Activated CD4-positive, alpha-beta T cell treated with anti-CD3 and anti-CD28 coated beads for 36 hours (primary cell): ENCODE measurements at regions of chr12 and their contacts with region 1.

Region 1: DNA sequence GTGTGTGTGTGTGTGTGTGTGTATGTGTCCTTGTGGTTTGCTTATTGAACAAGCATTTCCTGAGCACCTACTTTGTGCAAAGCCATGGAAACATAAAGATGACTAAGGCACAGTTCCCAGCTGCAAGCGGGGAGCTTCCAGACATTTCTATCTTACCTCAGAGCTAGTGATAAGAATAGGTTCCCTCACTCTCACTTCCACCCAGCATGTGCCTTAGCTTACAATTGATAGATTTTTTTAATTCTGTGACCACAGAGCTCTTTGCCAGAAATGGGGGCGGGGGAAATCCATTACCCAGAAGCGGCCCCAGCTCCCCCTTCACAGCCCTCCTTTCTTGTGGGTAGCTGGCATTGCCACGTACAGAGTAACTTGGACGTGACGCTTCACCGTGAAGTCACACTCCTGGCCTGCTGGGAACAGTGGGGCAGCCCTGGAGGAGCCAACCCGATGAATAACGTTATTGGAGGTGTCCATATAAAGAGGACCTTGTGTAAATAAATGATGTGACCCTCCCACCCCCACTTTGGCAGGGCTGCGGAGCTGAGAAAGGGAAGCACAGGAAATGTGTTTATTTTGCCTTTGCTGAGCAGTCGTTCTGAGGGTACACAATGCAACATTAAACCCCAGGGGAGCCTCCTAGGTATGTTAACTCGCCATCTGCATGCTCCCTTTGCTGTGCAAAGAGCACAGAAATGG is 238.9 kb downstream of the CHST11 start:
- DNase-seq: peak; percentile 92
- ATAC-seq: peak; percentile 86
- H3K4me3 Mint-ChIP-seq: peak overlapping the region; percentile 36
- H3K27ac Mint-ChIP-seq: peak overlapping the region; percentile 92
- H3K4me1 Mint-ChIP-seq: peaks cover 69% of the 10 kb centered on the region
- H3K27me3 Mint-ChIP-seq: no peaks in the 10 kb centered on the region

Region 2: DNA sequence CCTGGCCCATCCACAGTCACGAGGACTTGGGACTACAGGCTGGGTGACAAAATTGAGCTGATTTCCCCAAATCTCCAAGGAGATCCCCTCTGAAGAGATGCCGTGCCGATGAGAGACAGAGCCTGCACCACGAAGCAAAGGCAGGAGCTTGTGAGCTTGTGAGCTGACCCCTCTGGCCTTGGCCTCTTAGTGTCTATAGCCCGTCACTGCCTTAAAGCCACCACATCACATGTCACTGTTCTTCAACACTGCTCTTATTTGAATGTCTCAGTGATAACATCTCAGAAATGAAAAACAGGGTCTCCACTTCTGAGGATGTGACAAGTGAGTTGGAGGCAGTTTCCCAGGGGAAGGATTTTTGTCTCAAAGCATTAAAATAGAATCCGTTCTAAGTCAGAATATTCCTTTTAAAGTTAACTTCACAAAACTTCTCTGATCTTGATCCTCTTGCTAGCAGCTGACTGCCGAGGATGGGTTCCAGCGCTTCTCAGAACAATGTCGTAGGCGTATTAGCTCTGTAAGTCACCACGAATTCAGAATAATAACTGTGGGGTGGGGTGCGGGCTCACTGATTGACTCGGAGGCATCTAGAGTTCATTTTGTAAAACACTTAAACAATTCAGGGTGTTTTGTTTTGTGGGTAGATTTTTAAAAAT is 201.3 kb before region 1 on chr12:
- CTCF ChIA-PET with region 1: no interaction called
- POLR2A ChIA-PET with region 1: no interaction called
- intact Hi-C with region 1: loop called (anchors 5 kb)
- DNase-seq: peak; percentile 88
- ATAC-seq: peak; percentile 72
- H3K4me3 Mint-ChIP-seq: peak overlapping the region; percentile 35
- H3K27ac Mint-ChIP-seq: peak overlapping the region; percentile 85
- H3K4me1 Mint-ChIP-seq: peaks cover 88% of the 10 kb centered on the region
- H3K27me3 Mint-ChIP-seq: no peaks in the 10 kb centered on the region

Region 3: GRCh38 chr12:104641862-104642261 is 53.7 kb before region 1 on chr12:
- CTCF ChIA-PET with region 1: no interaction called
- POLR2A ChIA-PET with region 1: no interaction called
- intact Hi-C with region 1: no loop called
- DNase-seq: no peak
- ATAC-seq: peak; percentile 57
- H3K4me3 Mint-ChIP-seq: no peak overlapping the region
- H3K27ac Mint-ChIP-seq: no peak overlapping the region
- H3K4me1 Mint-ChIP-seq: peaks cover 47% of the 10 kb centered on the region
- H3K27me3 Mint-ChIP-seq: no peaks in the 10 kb centered on the region

Region 4: DNA sequence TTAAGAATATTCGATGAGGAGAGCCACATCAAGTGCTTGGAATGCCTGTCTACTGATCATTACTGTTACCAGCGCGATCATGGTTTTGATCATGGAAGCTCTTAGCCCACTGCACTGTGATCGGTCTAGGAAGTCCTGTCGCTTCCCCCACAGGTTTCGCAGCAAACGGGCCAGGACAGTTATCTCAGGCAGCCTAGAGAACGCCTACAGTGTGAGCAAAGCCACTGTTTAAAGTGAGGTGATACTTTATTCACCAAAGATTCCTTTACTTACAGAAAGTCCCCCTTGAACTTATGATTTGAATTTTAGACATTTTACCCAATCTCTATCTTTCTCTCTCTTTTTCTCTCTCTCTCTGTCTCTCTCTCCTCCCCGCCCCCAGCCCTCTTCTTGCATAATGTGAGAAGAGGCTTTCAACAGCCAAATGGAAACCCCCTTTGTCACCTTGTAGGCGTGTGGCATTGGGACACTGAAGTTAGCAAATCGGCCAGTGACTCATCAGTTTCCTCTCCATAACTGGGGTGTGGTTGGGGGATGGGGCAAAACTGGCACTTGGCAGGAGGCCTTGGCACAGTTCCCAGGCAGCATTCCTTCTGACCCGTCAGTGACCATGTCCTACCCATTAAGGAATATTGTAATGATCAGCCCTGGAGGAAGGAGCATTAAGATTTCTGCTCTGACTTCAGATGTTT is 24.0 kb before region 1 on chr12:
- CTCF ChIA-PET with region 1: interaction called, 3 read pairs
- POLR2A ChIA-PET with region 1: interaction called, 6 read pairs
- intact Hi-C with region 1: loop called in 1 of 2 experiments (anchors 1 kb)
- DNase-seq: peak; percentile 95
- ATAC-seq: peak; percentile 84
- H3K4me3 Mint-ChIP-seq: peak overlapping the region; percentile 41
- H3K27ac Mint-ChIP-seq: peak overlapping the region; percentile 93
- H3K4me1 Mint-ChIP-seq: peaks cover 60% of the 10 kb centered on the region
- H3K27me3 Mint-ChIP-seq: no peaks in the 10 kb centered on the region

Region 5: GRCh38 chr12:104720339-104721038 is 24.9 kb after region 1 on chr12:
- CTCF ChIA-PET with region 1: no interaction called
- POLR2A ChIA-PET with region 1: interaction called, 3 read pairs
- intact Hi-C with region 1: loop called in 1 of 2 experiments (anchors 2 kb)
- DNase-seq: peak; percentile 75
- ATAC-seq: peak; percentile 69
- H3K4me3 Mint-ChIP-seq: peak overlapping the region; percentile 73
- H3K27ac Mint-ChIP-seq: peak overlapping the region; percentile 95
- H3K4me1 Mint-ChIP-seq: peaks cover 40% of the 10 kb centered on the region
- H3K27me3 Mint-ChIP-seq: no peaks in the 10 kb centered on the region

Region 6: DNA sequence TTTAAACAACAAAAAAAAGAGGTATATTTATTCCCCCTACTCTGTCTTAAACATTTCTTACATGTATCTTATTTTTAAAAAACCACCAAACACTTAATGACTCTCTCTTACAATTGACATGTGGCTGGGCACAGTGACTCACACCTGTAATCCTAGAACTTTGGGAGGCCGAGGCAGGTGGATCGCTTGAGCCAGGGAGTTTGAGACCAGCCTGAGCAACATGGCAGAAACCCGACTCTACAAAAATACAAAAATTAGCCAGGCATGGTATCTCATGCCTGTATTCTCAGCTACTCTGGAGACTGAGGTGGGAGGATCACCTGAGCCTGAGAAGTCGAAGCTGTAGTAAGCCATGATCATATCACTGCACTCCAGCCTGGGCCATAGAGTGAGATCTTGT is 246.5 kb after region 1 on chr12:
- CTCF ChIA-PET with region 1: no interaction called
- POLR2A ChIA-PET with region 1: interaction called, 12 read pairs
- intact Hi-C with region 1: no loop called
- DNase-seq: no peak
- ATAC-seq: no peak
- H3K4me3 Mint-ChIP-seq: no peak overlapping the region
- H3K27ac Mint-ChIP-seq: no peak overlapping the region
- H3K4me1 Mint-ChIP-seq: no peaks in the 10 kb centered on the region
- H3K27me3 Mint-ChIP-seq: peaks cover 4% of the 10 kb centered on the region